ENCODE measurements at regions of chr2 and their contacts with region 1.

Region 1: GRCh38 chr2:85538486-85539360 is at the start of gene MAT2A:
- DNase-seq: peak; percentile 50 to 90 (median 73)
- ATAC-seq: peak; percentile 78 to 84 (median 80)
- H3K4me3 ChIP-seq: peak within 1 kb of the TSS; percentile 97 to 100
- H3K4me3 Mint-ChIP-seq: peak within 1 kb of the TSS; percentile 92 to 96 (median 94)
- H3K27ac ChIP-seq: peak within 1 kb of the TSS; percentile 78
- H3K27ac Mint-ChIP-seq: peak within 1 kb of the TSS; percentile 93 to 95
- H3K4me1 ChIP-seq: peaks cover 23 to 31% of the 10 kb centered on the region in 2 experiments
- H3K4me1 Mint-ChIP-seq: peaks cover 45 to 49% (median 45%) of the 10 kb centered on the region in 3 donors
- H3K27me3 ChIP-seq: no peaks in the 10 kb centered on the region
- H3K27me3 Mint-ChIP-seq: no peaks in the 10 kb centered on the region
- total RNA-seq, gene MAT2A: 110 to 184 (median 165) TPM

Region 2: GRCh38 chr2:85420536-85421259 is 118.0 kb before region 1 on chr2:
- CTCF ChIA-PET with region 1: interaction called, 3 to 15 read pairs
- POLR2A ChIA-PET with region 1: interaction called in 1 of 2 experiments, 8 read pairs
- DNase-seq: peak; percentile 47 to 92 (median 81)
- ATAC-seq: peak; percentile 59 to 68 (median 65)
- H3K4me3 ChIP-seq: no peak overlapping the region
- H3K4me3 Mint-ChIP-seq: peak overlapping the region; percentile 62 to 89 (median 74)
- H3K27ac ChIP-seq: peak overlapping the region; percentile 20
- H3K27ac Mint-ChIP-seq: peak overlapping the region; percentile 84 to 86
- H3K4me1 ChIP-seq: peaks cover 12 to 31% of the 10 kb centered on the region in 2 experiments
- H3K4me1 Mint-ChIP-seq: peaks cover 20 to 27% (median 22%) of the 10 kb centered on the region in 3 donors
- H3K27me3 ChIP-seq: no peaks in the 10 kb centered on the region
- H3K27me3 Mint-ChIP-seq: no peaks in the 10 kb centered on the region

Region 3: GRCh38 chr2:85437488-85438284 is 101.0 kb before region 1 on chr2:
- CTCF ChIA-PET with region 1: no interaction called
- POLR2A ChIA-PET with region 1: interaction called, 3 to 11 read pairs
- DNase-seq: peak; percentile 46 to 88 (median 68)
- ATAC-seq: peak; percentile 83 to 88 (median 86)
- H3K4me3 ChIP-seq: peak overlapping the region; percentile 49 to 55
- H3K4me3 Mint-ChIP-seq: peak overlapping the region; percentile 79 to 86 (median 83)
- H3K27ac ChIP-seq: peak overlapping the region; percentile 89
- H3K27ac Mint-ChIP-seq: peak overlapping the region; percentile 95 to 97
- H3K4me1 ChIP-seq: peaks cover 5 to 35% of the 10 kb centered on the region in 2 experiments
- H3K4me1 Mint-ChIP-seq: peaks cover 24 to 27% (median 26%) of the 10 kb centered on the region in 3 donors
- H3K27me3 ChIP-seq: peaks cover 0 to 3% of the 10 kb centered on the region in 2 experiments
- H3K27me3 Mint-ChIP-seq: no peaks in the 10 kb centered on the region

Region 4: DNA sequence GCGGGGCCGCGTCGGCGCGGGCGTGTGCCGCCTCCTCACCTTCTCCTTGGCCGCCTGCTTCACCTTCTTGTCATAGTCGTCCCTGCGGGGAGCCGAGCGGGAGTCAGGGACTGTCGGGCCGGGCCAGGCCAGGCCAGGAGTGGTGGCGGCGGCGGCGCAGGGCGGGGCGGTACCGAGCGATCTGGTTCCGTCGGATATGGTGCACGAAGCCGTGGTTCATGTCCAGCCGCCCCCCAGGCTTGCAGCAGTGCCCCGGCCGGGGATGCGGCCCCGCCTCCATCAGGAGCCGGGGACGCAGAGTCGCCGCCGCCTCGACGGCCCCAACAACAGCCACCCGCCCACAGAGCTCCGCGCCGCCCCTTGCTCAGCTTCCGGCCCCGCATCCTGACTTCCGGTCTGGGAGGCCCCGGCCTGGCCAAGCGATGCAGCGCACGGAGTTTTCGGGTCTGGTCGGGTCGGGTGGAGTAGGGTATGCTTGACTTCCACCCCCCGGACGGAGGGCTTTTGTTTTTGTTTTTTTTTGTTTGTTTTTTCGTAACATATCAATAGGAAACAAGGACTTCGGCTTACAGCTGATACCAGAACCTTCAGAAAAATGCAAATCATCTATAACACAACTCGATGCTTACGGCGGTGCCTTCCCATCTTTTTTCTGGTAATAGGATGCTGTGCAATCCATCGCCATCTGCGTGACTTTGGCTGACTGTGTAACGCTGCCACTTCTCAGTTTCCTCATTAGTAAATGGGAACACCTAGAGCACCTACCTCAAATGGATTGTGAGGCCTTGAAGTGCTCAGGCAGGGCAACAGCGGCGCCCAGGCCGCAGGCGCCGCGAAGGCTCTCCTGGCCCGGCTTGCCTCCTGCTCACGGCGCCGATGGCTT is 73.2 kb after region 1 on chr2 and contains the start of gene C2orf68:
- CTCF ChIA-PET with region 1: no interaction called
- POLR2A ChIA-PET with region 1: no interaction called
- DNase-seq: peak; percentile 56 to 85 (median 74)
- ATAC-seq: peak; percentile 68 to 74 (median 70)
- H3K4me3 ChIP-seq: peak within 1 kb of the TSS; percentile 59 to 71
- H3K4me3 Mint-ChIP-seq: peak within 1 kb of the TSS; percentile 93 to 98 (median 98)
- H3K27ac ChIP-seq: peak within 1 kb of the TSS; percentile 76
- H3K27ac Mint-ChIP-seq: peak within 1 kb of the TSS; percentile 93 to 94
- H3K4me1 ChIP-seq: peaks cover 8 to 40% of the 10 kb centered on the region in 2 experiments
- H3K4me1 Mint-ChIP-seq: peaks cover 23 to 40% (median 38%) of the 10 kb centered on the region in 3 donors
- H3K27me3 ChIP-seq: no peaks in the 10 kb centered on the region
- H3K27me3 Mint-ChIP-seq: no peaks in the 10 kb centered on the region
- total RNA-seq, gene C2orf68: 45.3 to 77.9 (median 62.4) TPM

Region 5: DNA sequence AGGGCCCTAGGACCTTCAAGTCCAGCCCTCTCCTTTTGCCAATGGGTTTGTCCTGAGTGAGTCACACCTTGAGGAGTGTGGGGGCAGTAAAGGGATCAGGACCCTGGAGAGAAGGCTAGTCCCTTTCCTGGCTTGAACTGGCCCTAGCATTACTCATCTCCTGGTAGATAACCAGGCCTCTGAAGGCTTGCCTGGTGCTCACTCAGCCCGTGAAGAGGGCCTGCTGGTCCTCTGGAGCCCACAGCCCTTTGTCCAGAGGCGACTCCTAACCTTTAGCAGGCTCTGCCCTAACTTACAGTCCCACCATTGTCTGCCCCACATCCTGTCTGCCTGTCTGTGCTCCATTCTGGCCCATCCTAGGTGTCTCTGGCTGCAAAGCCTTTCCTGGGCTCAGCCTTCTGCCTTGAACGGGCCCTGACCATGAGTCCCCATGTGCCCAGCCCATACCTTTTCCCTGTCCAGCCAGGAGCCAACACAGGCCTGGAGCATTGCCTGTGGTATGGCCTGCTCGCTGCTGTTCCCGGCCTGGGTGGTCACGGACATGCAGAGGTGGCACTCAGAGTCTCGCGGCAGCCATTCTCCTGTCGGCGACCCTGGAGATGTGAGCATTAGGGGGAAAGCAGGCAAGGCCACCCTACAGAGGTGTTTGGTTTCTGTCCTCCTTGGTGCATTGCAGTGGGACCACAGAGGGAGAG is 124.3 kb after region 1 on chr2:
- CTCF ChIA-PET with region 1: no interaction called
- POLR2A ChIA-PET with region 1: no interaction called
- DNase-seq: no peak
- ATAC-seq: no peak
- H3K4me3 ChIP-seq: no peak overlapping the region
- H3K4me3 Mint-ChIP-seq: no peak overlapping the region
- H3K27ac ChIP-seq: no peak overlapping the region
- H3K27ac Mint-ChIP-seq: no peak overlapping the region
- H3K4me1 ChIP-seq: peaks cover 0 to 3% of the 10 kb centered on the region in 2 experiments
- H3K4me1 Mint-ChIP-seq: peaks cover 0 to 3% (median 0%) of the 10 kb centered on the region in 3 donors
- H3K27me3 ChIP-seq: peaks cover 0 to 17% of the 10 kb centered on the region in 2 experiments
- H3K27me3 Mint-ChIP-seq: no peaks in the 10 kb centered on the region